ENCODE measurements at regions of chr1 and their contacts with region 1.

Region 1: GRCh38 chr1:169711469-169712281 is at the start of gene SELL:
- DNase-seq: peak; percentile 58 to 67
- H3K4me3 ChIP-seq: peak within 1 kb of the TSS; percentile 48; the same call in 1 of the 2 replicates
- H3K27ac ChIP-seq: no peak within 1 kb of the TSS
- H3K4me1 ChIP-seq: peaks cover 9% of the 10 kb centered on the region
- H3K27me3 ChIP-seq: peaks cover 7% of the 10 kb centered on the region; the same call in 1 of the 2 replicates
- CTCF ChIP-seq: peak; percentile 91
- total RNA-seq, gene SELL: 6.5 and 6.7 TPM in 2 replicates

Region 2: GRCh38 chr1:169466259-169467230 is 245.1 kb before region 1 on chr1:
- CTCF ChIA-PET with region 1: no interaction called
- POLR2A ChIA-PET with region 1: no interaction called
- intact Hi-C with region 1: loop called (anchors 5 kb)
- DNase-seq: peak in 1 of 2 experiments; percentile 29
- H3K4me3 ChIP-seq: no peak overlapping the region
- H3K27ac ChIP-seq: no peak overlapping the region
- H3K4me1 ChIP-seq: no peaks in the 10 kb centered on the region
- H3K27me3 ChIP-seq: no peaks in the 10 kb centered on the region
- CTCF ChIP-seq: peak; percentile 67; the same call in 1 of the 2 replicates

Region 3: GRCh38 chr1:169546087-169546995 is 165.3 kb before region 1 on chr1:
- CTCF ChIA-PET with region 1: no interaction called
- POLR2A ChIA-PET with region 1: no interaction called
- intact Hi-C with region 1: loop called (anchors 1 kb)
- DNase-seq: peak; percentile 44 to 63
- H3K4me3 ChIP-seq: no peak overlapping the region
- H3K27ac ChIP-seq: no peak overlapping the region
- H3K4me1 ChIP-seq: no peaks in the 10 kb centered on the region
- H3K27me3 ChIP-seq: no peaks in the 10 kb centered on the region
- CTCF ChIP-seq: peak; percentile 90

Region 4: GRCh38 chr1:169601093-169601881 is 110.4 kb before region 1 on chr1:
- CTCF ChIA-PET with region 1: interaction called, 13 read pairs
- POLR2A ChIA-PET with region 1: no interaction called
- intact Hi-C with region 1: loop called (anchors 1 kb)
- DNase-seq: no peak
- H3K4me3 ChIP-seq: no peak overlapping the region
- H3K27ac ChIP-seq: no peak overlapping the region
- H3K4me1 ChIP-seq: no peaks in the 10 kb centered on the region
- H3K27me3 ChIP-seq: no peaks in the 10 kb centered on the region
- CTCF ChIP-seq: peak; percentile 76

Region 5: DNA sequence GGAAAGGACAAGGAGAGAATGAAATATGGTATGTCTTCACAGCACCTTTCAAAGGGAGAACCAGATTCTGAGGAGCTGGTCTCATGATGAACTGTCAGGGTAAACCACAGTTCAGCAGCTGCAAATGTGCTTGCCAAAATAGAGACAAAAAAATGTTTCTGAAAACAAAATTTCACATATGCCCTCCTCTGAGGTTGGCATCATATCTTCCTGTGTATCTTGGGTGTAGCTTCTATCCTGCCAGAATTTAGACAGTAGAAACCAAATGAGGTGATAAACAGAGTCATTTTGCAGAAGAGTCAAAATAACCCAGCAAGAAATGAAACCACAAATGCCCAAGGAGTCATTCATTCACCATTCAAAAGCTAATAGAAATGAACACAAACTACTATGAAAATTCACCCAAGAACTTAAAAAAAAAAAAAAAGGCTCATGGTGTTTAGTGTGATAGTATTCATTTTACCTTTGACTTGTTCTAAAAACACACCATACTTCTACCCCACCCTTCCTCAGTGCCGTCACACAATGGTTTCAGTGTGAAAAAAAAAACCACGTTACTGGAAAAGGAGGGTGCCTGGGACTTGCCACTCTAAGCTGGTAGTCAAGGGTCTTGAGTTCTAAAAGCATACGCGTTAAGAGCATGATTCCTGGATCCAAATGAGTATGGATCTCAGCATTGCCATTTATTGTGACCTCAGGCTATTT is 18.8 kb before region 1 on chr1:
- CTCF ChIA-PET with region 1: interaction called, 10 read pairs
- POLR2A ChIA-PET with region 1: no interaction called
- intact Hi-C with region 1: no loop called
- DNase-seq: no peak
- H3K4me3 ChIP-seq: no peak overlapping the region
- H3K27ac ChIP-seq: no peak overlapping the region
- H3K4me1 ChIP-seq: peaks cover 13% of the 10 kb centered on the region
- H3K27me3 ChIP-seq: no peaks in the 10 kb centered on the region
- CTCF ChIP-seq: no peak

Region 6: GRCh38 chr1:169794530-169795416 is 83.1 kb after region 1 on chr1 and contains the start of gene METTL18:
- CTCF ChIA-PET with region 1: no interaction called
- POLR2A ChIA-PET with region 1: no interaction called
- intact Hi-C with region 1: loop called (anchors 1 kb)
- DNase-seq: peak; percentile 90 to 91
- H3K4me3 ChIP-seq: peak within 1 kb of the TSS; percentile 85
- H3K27ac ChIP-seq: peak within 1 kb of the TSS; percentile 78
- H3K4me1 ChIP-seq: peaks cover 6% of the 10 kb centered on the region; the same call in 1 of the 2 replicates
- H3K27me3 ChIP-seq: no peaks in the 10 kb centered on the region
- CTCF ChIP-seq: no peak
- total RNA-seq, gene METTL18: 7.5 and 11.4 TPM in 2 replicates

Region 7: GRCh38 chr1:169809370-169810095 is 97.9 kb after region 1 on chr1:
- CTCF ChIA-PET with region 1: interaction called, 6 read pairs
- POLR2A ChIA-PET with region 1: no interaction called
- intact Hi-C with region 1: loop called (anchors 1 kb)
- DNase-seq: no peak
- H3K4me3 ChIP-seq: no peak overlapping the region
- H3K27ac ChIP-seq: no peak overlapping the region
- H3K4me1 ChIP-seq: no peaks in the 10 kb centered on the region
- H3K27me3 ChIP-seq: no peaks in the 10 kb centered on the region
- CTCF ChIP-seq: peak; percentile 84

Region 8: GRCh38 chr1:169902751-169903150 is 191.1 kb after region 1 on chr1:
- CTCF ChIA-PET with region 1: no interaction called
- POLR2A ChIA-PET with region 1: no interaction called
- intact Hi-C with region 1: no loop called
- DNase-seq: no peak
- H3K4me3 ChIP-seq: no peak overlapping the region
- H3K27ac ChIP-seq: no peak overlapping the region
- H3K4me1 ChIP-seq: no peaks in the 10 kb centered on the region
- H3K27me3 ChIP-seq: no peaks in the 10 kb centered on the region
- CTCF ChIP-seq: no peak